ENCODE measurements at regions of chr16 and their contacts with region 1.

Region 1: GRCh38 chr16:75794426-75794825 is 68.1 kb upstream of the CPHXL start:
- DNase-seq: no peak
- ATAC-seq: no peak
- H3K4me3 ChIP-seq: no peak overlapping the region
- H3K27ac ChIP-seq: no peak overlapping the region
- H3K4me1 ChIP-seq: no peaks in the 10 kb centered on the region
- H3K27me3 ChIP-seq: no peaks in the 10 kb centered on the region

Region 2: GRCh38 chr16:76653390-76654026 is 859.1 kb after region 1 on chr16:
- intact Hi-C with region 1: loop called in 1 of 4 experiments (anchors 10 kb)
- DNase-seq: no peak
- ATAC-seq: no peak
- H3K4me3 ChIP-seq: no peak overlapping the region
- H3K27ac ChIP-seq: no peak overlapping the region
- H3K4me1 ChIP-seq: no peaks in the 10 kb centered on the region
- H3K27me3 ChIP-seq: no peaks in the 10 kb centered on the region

Measured in right cardiac atrium (tissue), 5 donors.